GM12878 (cell line): ENCODE measurements at regions of chr18 and their contacts with region 1.

Region 1: GRCh38 chr18:32276906-32277305 is 87.1 kb downstream of the MEP1B start:
- DNase-seq: no peak
- ATAC-seq: no peak
- H3K4me3 ChIP-seq: no peak overlapping the region
- H3K27ac ChIP-seq: no peak overlapping the region
- H3K4me1 ChIP-seq: no peaks in the 10 kb centered on the region
- H3K27me3 ChIP-seq: peaks cover 0 to 6% of the 10 kb centered on the region in 2 experiments; a peak in 2 of 4 replicates
- CTCF ChIP-seq: no peak
- EP300 ChIP-seq: no peak
- POLR2A ChIP-seq: no peak
- RAD21 ChIP-seq: no peak

Region 2: DNA sequence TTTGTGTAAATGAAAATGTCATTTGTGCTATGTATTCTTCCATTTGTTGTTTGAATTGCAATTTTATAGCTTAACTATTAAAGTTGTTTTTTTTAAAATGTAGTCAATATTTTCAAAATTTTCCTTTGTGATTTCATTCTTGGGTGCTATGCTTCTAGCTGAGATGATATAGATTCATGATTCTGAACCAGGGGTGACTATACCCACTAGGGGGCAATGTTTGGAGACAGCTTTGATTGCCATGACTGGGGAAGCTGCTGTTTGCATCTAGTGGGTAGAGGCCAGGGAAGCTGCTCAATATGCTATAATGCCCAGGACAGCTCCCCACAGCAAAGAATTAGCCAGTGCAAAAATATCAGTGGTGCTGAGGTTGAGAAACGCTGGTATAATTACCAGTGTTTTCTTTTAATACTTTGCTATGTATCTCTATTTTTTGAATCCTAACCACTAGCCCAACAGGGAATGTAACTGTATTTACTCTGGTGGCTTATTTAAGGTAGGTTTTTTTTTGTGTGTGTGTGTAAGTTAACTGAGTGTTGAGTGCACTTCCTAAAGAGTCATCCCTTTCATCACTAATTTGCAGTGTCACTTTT is 12.7 kb after region 1 on chr18:
- CTCF ChIA-PET with region 1: interaction called, 16 read pairs
- POLR2A ChIA-PET with region 1: no interaction called
- RAD21 ChIA-PET with region 1: no interaction called
- SMC1A ChIA-PET with region 1: no interaction called
- in situ Hi-C with region 1: no loop called
- intact Hi-C with region 1: no loop called
- DNase-seq: no peak
- ATAC-seq: peak; percentile 84
- H3K4me3 ChIP-seq: no peak overlapping the region
- H3K27ac ChIP-seq: no peak overlapping the region
- H3K4me1 ChIP-seq: no peaks in the 10 kb centered on the region
- H3K27me3 ChIP-seq: no peaks in the 10 kb centered on the region
- CTCF ChIP-seq: peak; percentile 47 to 68 (median 63)
- EP300 ChIP-seq: no peak
- POLR2A ChIP-seq: no peak
- RAD21 ChIP-seq: peak; percentile 53